ENCODE measurements at regions of chr6 and their contacts with region 1.

Region 1: GRCh38 chr6:144232176-144232831 is 52.8 kb upstream of the UTRN start:
- DNase-seq: no peak
- H3K4me3 ChIP-seq: no peak overlapping the region
- H3K27ac ChIP-seq: no peak overlapping the region
- H3K4me1 ChIP-seq: no peaks in the 10 kb centered on the region
- H3K27me3 ChIP-seq: no peaks in the 10 kb centered on the region
- CTCF ChIP-seq: no peak

Region 2: GRCh38 chr6:144158133-144158532 is 74.2 kb before region 1 on chr6:
- CTCF ChIA-PET with region 1: no interaction called
- dilution Hi-C with region 1: loop called (anchors 5 kb)
- in situ Hi-C with region 1: no loop called
- intact Hi-C with region 1: no loop called
- DNase-seq: peak; percentile 46
- H3K4me3 ChIP-seq: no peak overlapping the region
- H3K27ac ChIP-seq: no peak overlapping the region
- H3K4me1 ChIP-seq: peaks cover 8% of the 10 kb centered on the region
- H3K27me3 ChIP-seq: no peaks in the 10 kb centered on the region
- CTCF ChIP-seq: no peak